ENCODE measurements at regions of chr1 and their contacts with region 1.

Region 1: GRCh38 chr1:91165033-91165654 is 143.3 kb upstream of the ZNF644 start:
- DNase-seq: no peak
- H3K4me3 ChIP-seq: no peak overlapping the region
- H3K27me3 ChIP-seq: no peaks in the 10 kb centered on the region
- CTCF ChIP-seq: peak; percentile 98

Region 2: DNA sequence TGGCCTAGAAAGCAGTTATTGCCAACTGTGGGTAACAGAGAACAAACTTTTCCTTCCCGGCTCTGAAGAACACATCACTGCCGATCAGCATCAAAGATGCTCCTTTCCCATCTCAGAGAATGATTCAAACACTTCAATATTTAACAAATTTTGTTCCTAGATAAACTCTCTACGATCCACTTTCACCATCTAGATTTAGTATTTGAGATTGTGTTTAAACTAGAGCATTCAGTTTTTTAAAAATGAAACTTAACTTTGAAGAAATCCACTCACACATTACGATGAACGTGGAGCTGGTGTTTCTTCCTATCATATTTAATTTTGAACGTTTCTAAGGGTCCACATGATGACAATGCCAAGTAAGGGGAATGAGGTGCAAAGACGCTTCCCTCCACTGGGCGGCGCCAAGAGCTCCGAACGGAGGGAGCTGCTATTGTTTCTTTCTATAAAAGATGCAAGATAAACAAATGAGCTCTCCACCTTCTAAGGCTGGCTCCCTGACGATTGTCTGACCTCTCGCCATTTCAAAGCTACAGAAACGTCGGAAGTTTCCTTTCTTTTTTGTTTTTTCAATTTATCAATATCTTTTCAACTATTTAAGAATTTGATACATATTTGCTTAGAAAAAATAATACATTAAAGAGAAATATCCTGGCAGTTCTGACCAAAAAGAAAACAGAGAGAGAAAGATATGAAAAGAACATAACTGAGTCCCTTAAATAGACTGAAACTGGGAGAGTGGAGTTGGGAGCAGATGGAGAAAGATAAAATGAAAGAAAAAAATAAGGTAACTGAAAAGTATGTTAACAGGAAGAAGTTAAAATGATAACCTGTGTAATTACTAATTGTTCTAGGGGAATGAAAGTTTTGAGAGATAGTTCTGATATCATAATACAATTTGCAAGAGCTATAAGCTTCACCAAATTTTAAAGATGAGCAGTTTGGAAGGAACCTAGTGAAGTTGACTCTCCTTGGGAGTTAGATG is 443.6 kb before region 1 on chr1:
- CTCF ChIA-PET with region 1: interaction called, 25 read pairs
- POLR2A ChIA-PET with region 1: no interaction called
- DNase-seq: peak; percentile 1
- H3K4me3 ChIP-seq: no peak overlapping the region
- H3K27me3 ChIP-seq: peaks cover 72% of the 10 kb centered on the region
- CTCF ChIP-seq: peak; percentile 92

Region 3: GRCh38 chr1:91054780-91055481 is 110.2 kb before region 1 on chr1:
- CTCF ChIA-PET with region 1: no interaction called
- POLR2A ChIA-PET with region 1: no interaction called
- DNase-seq: no peak
- H3K4me3 ChIP-seq: no peak overlapping the region
- H3K27me3 ChIP-seq: no peaks in the 10 kb centered on the region
- CTCF ChIP-seq: no peak

Region 4: DNA sequence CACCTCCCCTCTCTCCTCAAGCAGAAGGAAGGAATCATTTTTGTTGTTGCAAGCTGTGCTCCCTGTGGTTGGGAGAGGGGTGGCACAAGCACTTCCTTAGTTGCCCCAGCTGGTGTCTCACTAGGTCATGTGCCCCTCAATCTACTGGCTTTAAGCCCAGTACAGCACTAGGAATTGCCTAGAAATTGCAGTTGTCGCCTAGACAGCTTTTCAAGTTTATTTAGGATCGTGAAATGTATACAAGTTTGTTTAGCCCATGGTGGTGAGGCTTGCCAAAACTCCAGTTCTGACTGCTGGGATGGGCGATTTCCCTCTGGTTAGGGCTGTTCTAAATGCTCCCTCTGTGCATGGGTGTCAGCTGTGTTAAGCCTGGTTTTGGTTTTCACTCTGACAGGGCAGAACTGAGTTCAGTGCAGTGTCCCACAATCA is 16.5 kb before region 1 on chr1:
- CTCF ChIA-PET with region 1: interaction called, 23 read pairs
- POLR2A ChIA-PET with region 1: no interaction called
- DNase-seq: no peak
- H3K4me3 ChIP-seq: no peak overlapping the region
- H3K27me3 ChIP-seq: no peaks in the 10 kb centered on the region
- CTCF ChIP-seq: no peak

Region 5: GRCh38 chr1:91201176-91201575 is 36.0 kb after region 1 on chr1:
- CTCF ChIA-PET with region 1: interaction called, 10 read pairs
- POLR2A ChIA-PET with region 1: no interaction called
- DNase-seq: no peak
- H3K4me3 ChIP-seq: no peak overlapping the region
- H3K27me3 ChIP-seq: no peaks in the 10 kb centered on the region; the same call in 1 of the 2 replicates
- CTCF ChIP-seq: no peak

Region 6: GRCh38 chr1:91500756-91501522 is 335.8 kb after region 1 on chr1 and contains the start of gene CDC7:
- CTCF ChIA-PET with region 1: no interaction called
- POLR2A ChIA-PET with region 1: no interaction called
- DNase-seq: peak; percentile 53
- H3K4me3 ChIP-seq: peak within 1 kb of the TSS; percentile 60
- H3K27me3 ChIP-seq: no peaks in the 10 kb centered on the region
- CTCF ChIP-seq: peak; percentile 39; the same call in 1 of the 2 replicates
- polyA plus RNA-seq, gene CDC7: 2.6 and 2.8 TPM in 2 replicates

Measured in BJ (cell line).